GM10248 (cell line): ENCODE measurements at regions of chr12 and their contacts with region 1.

Region 1: GRCh38 chr12:120234643-120235368 is 30.7 kb downstream of the PXN start:
- DNase-seq: no peak
- CTCF ChIP-seq: peak; percentile 9

Region 2: DNA sequence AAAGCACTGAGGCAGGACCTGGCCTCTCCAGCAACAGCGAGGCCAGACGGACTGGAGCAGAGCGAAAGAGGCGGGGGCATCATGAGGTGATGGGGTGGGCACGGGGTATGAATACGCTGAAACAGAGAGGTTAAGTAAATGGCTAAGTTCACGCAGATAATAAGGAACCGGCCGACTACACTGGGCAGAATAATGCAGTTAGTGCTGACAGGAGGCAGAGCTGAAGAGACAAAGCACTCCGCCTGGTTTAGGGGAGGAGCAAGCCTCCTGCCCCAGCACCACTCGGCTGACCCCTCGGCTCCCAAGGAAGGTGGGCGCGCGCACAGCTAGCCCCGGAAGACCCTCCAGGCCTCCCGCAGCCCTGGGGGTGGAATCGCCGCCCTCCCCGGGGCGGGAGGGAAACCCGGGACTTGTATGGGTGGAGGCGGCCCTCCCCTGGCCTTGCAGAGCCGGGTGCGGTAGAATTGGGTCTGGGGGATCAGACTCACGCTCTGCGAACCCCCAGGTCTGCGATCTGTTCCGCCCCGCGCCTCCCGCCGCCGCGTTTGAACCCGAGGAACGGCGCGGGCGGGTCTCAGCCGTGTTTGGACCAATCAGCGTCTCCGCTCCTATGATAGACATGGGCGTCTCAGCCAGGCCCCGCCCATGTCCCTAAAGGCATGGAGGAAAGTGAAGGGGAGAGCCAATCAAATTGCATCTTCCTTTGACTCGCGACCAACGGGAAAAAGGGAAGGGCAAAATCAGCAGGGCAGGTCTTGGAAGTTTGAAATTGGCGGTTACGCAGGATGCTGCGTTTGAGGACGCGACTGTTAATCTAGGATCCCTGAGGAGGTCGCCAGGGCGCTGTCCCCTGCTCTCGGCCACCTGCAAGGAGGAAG is 357.8 kb before region 1 on chr12 and contains the start of gene CIT:
- CTCF ChIA-PET with region 1: no interaction called
- POLR2A ChIA-PET with region 1: no interaction called
- DNase-seq: peak; percentile 98
- CTCF ChIP-seq: no peak

Region 3: GRCh38 chr12:120167529-120168095 is 67.2 kb before region 1 on chr12:
- CTCF ChIA-PET with region 1: no interaction called
- POLR2A ChIA-PET with region 1: no interaction called
- DNase-seq: no peak
- CTCF ChIP-seq: no peak

Region 4: GRCh38 chr12:120249875-120250795 is 15.3 kb after region 1 on chr12:
- CTCF ChIA-PET with region 1: interaction called, 271 read pairs
- POLR2A ChIA-PET with region 1: interaction called, 3 read pairs
- DNase-seq: peak; percentile 54
- CTCF ChIP-seq: no peak